Activated B cell treated with CpG ODN at 0.5 μM for 24 hours (primary cell): ENCODE measurements at regions of chr14 and their contacts with region 1.

Region 1: DNA sequence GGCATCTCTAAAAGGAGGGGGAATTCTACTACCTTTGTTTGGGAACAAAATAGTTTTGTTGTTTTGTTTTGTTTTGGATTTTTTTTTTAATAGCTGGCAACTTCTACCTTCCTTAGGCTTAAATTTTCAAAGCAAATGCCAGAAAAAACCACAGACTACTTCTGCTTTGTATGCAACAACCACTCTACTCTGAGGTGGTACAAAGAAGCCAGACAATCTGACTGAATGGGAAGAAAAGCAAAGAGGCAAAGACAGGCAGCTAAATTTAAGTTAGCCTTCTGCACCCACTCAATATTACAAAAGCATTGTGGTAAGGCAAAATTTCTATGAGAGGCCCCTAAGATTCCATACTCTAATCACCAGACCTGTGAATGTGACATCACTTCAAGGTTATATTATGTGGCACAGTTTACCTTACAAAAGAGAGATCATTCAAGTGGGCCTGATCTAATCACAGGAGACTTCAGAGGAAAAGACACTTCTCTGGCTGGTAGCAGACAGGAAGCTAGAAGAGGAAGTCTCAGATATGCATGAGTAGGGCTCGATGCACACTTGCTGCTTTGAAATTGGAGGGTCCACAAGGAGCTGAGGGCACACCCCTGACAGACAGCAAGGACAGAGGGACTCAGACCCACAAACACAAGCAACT is 566.6 kb downstream of the RPS29 start:
- DNase-seq: peak; percentile 19
- ATAC-seq: peak; percentile 95
- H3K4me3 Mint-ChIP-seq: peak overlapping the region; percentile 49
- H3K27ac Mint-ChIP-seq: peak overlapping the region; percentile 83
- H3K4me1 Mint-ChIP-seq: peaks cover 61% of the 10 kb centered on the region
- H3K27me3 Mint-ChIP-seq: no peaks in the 10 kb centered on the region
- CTCF ChIP-seq: no peak

Region 2: DNA sequence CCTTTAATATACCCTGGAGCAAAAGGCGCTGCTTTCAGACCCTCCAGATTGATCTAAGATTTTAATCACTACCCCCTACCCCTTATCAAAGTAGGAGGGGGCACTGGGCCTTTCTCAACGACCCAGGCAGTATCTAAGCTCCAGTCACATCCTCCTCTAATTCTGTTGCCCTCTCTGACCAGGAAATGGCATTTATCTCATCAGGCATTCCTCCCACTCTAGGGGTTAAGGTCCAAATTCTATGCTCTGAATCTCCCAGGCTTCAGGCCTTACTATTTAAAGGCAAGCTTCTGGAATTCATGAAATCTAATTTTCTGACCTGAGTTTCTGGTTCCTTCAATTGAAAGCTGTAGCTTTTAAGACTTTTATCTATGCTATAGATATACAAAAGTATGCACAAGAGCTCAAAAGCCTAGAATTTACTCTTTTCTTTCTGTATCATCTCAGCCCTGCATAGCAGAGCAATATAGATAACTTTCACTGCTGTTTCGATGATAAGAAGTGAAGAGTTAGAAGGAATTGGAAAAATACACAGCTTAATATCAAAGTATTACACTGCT is 56.3 kb before region 1 on chr14:
- CTCF ChIA-PET with region 1: no interaction called
- POLR2A ChIA-PET with region 1: no interaction called
- intact Hi-C with region 1: no loop called
- DNase-seq: no peak
- ATAC-seq: no peak
- H3K4me3 Mint-ChIP-seq: no peak overlapping the region
- H3K27ac Mint-ChIP-seq: no peak overlapping the region
- H3K4me1 Mint-ChIP-seq: no peaks in the 10 kb centered on the region
- H3K27me3 Mint-ChIP-seq: no peaks in the 10 kb centered on the region
- CTCF ChIP-seq: no peak

Region 3: DNA sequence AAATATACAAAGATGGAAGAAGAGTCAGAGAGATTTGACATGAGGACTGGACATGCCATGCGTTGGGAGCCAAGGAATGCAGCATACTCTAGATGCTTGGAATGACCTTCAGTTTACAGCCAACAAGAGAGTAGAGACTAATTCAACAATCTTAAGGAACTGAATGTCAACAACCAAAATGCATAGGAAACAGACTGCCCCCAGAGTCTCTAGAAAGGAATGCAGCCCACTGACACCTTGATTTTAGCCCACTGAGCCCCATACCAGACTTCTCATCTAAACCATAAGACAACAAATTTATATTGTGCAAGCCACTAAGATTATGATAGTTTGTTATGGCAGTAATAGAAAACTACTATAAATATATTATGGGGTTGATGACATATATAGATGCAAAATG is 44.6 kb before region 1 on chr14:
- CTCF ChIA-PET with region 1: no interaction called
- POLR2A ChIA-PET with region 1: no interaction called
- intact Hi-C with region 1: loop called (anchors 5 kb)
- DNase-seq: no peak
- ATAC-seq: no peak
- H3K4me3 Mint-ChIP-seq: no peak overlapping the region
- H3K27ac Mint-ChIP-seq: no peak overlapping the region
- H3K4me1 Mint-ChIP-seq: no peaks in the 10 kb centered on the region
- H3K27me3 Mint-ChIP-seq: peaks cover 1% of the 10 kb centered on the region
- CTCF ChIP-seq: no peak

Region 4: GRCh38 chr14:49058511-49058910 is 38.9 kb after region 1 on chr14:
- CTCF ChIA-PET with region 1: no interaction called
- POLR2A ChIA-PET with region 1: no interaction called
- intact Hi-C with region 1: no loop called
- DNase-seq: no peak
- ATAC-seq: no peak
- H3K4me3 Mint-ChIP-seq: no peak overlapping the region
- H3K27ac Mint-ChIP-seq: no peak overlapping the region
- H3K4me1 Mint-ChIP-seq: no peaks in the 10 kb centered on the region
- H3K27me3 Mint-ChIP-seq: no peaks in the 10 kb centered on the region
- CTCF ChIP-seq: no peak